HEK293 (cell line): ENCODE measurements at regions of chr6 and their contacts with region 1.

Region 1: DNA sequence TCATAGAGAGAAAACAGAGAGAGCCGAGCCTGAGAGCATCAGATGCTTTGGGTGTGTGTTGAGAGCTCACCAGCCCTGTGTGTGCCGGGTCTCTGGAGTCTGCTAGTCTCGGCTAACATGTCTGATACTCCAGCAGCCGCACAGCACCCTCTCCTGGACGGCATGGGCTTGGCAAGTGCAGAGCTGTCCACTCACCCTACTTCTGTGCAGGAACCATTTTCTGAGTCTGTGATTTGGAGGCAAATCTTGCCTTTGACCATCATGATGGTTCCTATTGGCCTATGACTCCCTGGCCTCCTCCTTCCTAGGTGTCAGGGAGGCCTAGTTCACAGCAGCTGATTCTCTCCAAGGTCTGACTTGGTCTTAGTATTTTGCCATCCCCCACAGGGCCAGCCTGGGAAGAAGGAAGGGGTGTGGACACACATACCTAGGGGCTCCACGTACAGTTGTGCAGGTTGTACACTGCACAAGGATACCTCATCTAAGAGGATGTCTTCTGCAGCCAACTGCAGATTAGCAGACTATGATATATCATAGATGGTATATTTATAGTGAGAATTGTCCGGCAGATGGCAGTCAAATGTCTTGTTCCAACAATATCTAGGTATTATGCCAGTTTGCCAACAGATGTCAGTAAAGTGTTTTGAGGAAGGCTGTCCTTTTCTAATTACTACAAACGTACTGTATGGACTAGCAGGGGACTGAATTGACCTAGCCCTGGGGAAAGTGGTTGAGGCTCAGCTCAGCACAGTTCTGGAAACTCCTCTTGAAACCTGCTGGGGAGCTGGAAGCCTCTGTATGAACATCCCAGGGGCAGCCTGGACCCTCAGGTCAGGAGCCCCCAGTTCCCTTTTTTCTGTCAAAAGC is 13.0 kb downstream of the FGD2 start:
- H3K4me3 ChIP-seq: no peak overlapping the region
- H3K27ac ChIP-seq: no peak overlapping the region
- H3K4me1 ChIP-seq: peaks cover 3% of the 10 kb centered on the region; the same call in 1 of the 2 replicates
- CTCF ChIP-seq: peak; percentile 76

Region 2: GRCh38 chr6:36759148-36759759 is 259.2 kb before region 1 on chr6:
- CTCF ChIA-PET with region 1: interaction called, 238 read pairs
- POLR2A ChIA-PET with region 1: no interaction called
- H3K4me3 ChIP-seq: no peak overlapping the region
- H3K27ac ChIP-seq: no peak overlapping the region
- H3K4me1 ChIP-seq: no peaks in the 10 kb centered on the region; the same call in 1 of the 2 replicates
- CTCF ChIP-seq: peak; percentile 66

Region 3: DNA sequence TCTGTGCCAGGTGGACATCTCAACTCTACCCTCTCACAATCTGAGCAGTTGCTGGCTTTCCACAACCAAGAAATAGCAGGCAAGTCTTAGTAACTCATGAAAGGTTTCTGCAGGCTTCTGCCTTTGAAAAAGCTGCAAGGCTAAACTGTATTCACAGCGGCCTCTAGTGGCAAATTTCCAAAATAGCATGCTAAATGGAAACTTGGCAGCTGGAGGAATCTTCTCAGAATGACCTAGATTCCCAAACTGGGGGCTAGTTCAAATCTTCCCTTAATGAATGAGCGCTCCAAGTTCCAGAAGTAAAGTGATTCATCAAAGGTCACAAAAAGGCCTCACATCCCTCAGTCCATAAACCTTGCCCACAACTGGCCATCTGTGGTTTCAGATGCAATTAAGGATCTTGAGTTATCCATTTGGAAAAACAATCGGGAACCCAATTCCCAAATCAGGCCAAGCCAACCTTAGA is 167.2 kb before region 1 on chr6:
- CTCF ChIA-PET with region 1: interaction called, 50 read pairs
- POLR2A ChIA-PET with region 1: interaction called, 3 read pairs
- H3K4me3 ChIP-seq: no peak overlapping the region
- H3K27ac ChIP-seq: no peak overlapping the region
- H3K4me1 ChIP-seq: no peaks in the 10 kb centered on the region; the same call in 1 of the 2 replicates
- CTCF ChIP-seq: peak; percentile 40; the same call in 1 of the 2 replicates

Region 4: GRCh38 chr6:36904114-36904513 is 114.3 kb before region 1 on chr6:
- CTCF ChIA-PET with region 1: interaction called, 22 read pairs
- POLR2A ChIA-PET with region 1: no interaction called
- H3K4me3 ChIP-seq: no peak overlapping the region
- H3K27ac ChIP-seq: no peak overlapping the region
- H3K4me1 ChIP-seq: no peaks in the 10 kb centered on the region
- CTCF ChIP-seq: no peak

Region 5: DNA sequence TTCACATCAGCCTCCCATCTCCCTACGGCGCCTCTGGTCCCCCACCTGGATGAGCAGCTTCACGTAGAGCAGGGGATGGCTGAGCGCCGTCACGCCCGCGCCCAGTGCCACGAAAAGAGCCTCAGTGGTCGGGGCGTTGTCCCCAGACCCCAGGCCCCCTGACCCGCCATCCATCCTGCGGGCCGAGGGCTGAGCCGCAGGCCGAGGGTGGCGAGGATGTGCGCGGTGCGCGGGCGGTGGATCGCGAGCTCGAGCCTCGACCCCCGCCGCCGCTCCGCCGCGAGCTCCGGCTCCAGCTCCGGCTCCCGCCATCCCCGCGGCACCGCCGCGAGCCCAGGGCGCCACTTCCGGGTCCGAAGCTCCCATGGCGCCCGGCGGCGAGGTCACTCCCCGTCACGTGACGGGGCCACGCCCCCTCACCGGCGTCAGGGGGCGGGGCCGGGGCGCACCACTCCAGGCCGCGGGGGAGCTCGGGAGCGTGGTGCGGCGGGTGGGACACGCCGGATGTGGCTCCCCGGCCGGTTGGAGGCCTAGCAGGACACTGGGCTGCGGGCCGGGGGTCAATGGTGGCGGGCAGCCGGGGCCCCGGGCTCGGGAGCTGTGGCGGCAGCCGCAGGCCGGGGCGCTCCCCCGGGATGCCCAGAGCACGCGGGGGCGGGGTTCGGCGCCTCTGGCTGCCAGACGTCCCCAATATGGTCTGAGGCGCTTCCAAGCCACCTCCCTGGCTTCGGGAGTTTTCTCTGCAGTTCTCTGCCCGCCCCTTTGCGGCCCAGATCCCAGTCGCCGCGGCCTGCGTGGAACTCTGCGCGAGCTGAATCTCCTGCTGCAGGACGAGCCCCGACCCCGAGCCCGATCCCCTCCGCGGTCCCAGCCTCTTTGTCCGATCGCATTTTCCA is 32.4 kb before region 1 on chr6 and contains the start of gene MTCH1:
- CTCF ChIA-PET with region 1: interaction called, 41 read pairs
- POLR2A ChIA-PET with region 1: interaction called, 11 read pairs
- H3K4me3 ChIP-seq: peak within 1 kb of the TSS; percentile 77
- H3K27ac ChIP-seq: peak within 1 kb of the TSS; percentile 92
- H3K4me1 ChIP-seq: peaks cover 12% of the 10 kb centered on the region
- CTCF ChIP-seq: no peak

Region 6: DNA sequence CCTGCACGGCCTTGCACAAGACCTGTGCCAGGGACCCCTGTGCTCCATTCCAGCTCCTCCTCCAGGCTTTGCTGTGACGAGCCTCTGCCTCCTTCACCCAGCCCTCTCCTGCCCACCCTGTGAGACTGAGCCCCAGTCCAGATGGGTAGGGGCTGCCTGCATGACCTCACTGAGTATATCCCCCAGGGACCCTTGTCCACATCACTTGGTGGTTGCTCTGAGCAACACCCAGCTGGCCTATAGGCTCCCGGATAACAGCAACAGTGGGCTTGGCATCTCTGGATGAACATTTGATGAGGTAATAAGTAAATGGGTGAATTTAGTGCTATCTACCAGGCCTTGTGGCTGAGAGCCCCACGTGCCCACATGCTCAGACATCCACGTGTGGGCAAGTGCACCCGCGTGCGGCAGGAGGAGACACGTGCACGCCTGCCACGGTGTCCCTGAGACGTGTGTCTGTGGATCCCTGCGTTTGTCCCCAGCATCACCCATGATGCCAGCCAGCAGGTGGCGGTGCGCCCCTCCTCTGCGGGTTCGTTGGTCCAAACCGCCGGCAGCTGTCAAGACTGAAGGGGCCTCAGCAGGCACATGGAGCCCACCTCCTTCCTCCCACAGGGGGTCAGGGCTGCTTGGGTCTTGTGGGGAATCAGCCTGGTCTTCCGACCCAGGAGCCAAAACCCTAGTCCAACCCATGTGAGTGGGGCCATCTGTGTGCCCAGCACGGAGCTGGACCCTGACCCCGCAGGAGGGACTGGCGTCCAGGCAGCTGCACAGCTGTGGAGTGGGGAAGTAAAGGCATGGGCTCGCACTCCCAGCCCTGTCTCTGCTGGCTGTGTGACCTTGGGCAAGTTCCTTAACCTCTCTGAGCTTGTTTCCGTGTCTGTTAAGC is 33.0 kb after region 1 on chr6:
- CTCF ChIA-PET with region 1: interaction called, 380 read pairs
- POLR2A ChIA-PET with region 1: interaction called, 3 read pairs
- H3K4me3 ChIP-seq: no peak overlapping the region
- H3K27ac ChIP-seq: no peak overlapping the region
- H3K4me1 ChIP-seq: no peaks in the 10 kb centered on the region
- CTCF ChIP-seq: peak; percentile 97

Region 7: GRCh38 chr6:37222125-37222967 is 203.9 kb after region 1 on chr6:
- CTCF ChIA-PET with region 1: interaction called, 18 read pairs
- POLR2A ChIA-PET with region 1: no interaction called
- H3K4me3 ChIP-seq: peak overlapping the region; percentile 64
- H3K27ac ChIP-seq: peak overlapping the region; percentile 68; the same call in 1 of the 2 replicates
- H3K4me1 ChIP-seq: peaks cover 6% of the 10 kb centered on the region
- CTCF ChIP-seq: no peak; the same call in 1 of the 2 replicates